ENCODE measurements at regions of chr12 and their contacts with region 1.

Region 1: DNA sequence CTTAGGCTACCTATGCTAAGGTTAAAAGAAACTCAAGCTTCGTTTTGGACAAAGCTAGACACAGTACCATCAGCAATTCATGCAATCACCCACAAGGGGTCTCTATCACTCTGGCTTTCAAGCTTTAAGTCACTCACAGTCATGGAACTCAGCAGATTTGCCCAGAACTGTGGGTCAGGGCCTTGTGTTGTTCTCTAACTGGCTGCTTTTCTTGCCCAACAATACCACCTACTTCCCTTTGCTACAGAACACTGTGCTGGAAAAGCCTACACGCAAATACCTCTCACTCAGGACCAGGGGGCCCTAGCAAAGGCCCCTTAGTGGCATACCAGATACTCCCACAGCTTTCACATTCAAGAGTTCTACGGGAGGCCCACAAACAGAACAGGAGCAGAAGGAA is 9.1 kb downstream of the NEMP1 start:
- DNase-seq: peak; percentile 73 to 77 (median 75)
- H3K4me3 ChIP-seq: no peak overlapping the region
- H3K4me3 Mint-ChIP-seq: peak overlapping the region in 3 of 8 donors; percentile 0 to 37 (median 28)
- H3K27ac ChIP-seq: peak overlapping the region; percentile 57
- H3K27ac Mint-ChIP-seq: peak overlapping the region; percentile 75 to 89 (median 85)
- H3K4me1 ChIP-seq: peaks cover 25% of the 10 kb centered on the region
- H3K4me1 Mint-ChIP-seq: peaks cover 11 to 34% (median 15%) of the 10 kb centered on the region in 4 donors
- H3K27me3 ChIP-seq: no peaks in the 10 kb centered on the region
- H3K27me3 Mint-ChIP-seq: no peaks in the 10 kb centered on the region

Region 2: GRCh38 chr12:57005980-57006808 is 63.3 kb before region 1 on chr12 and contains the start of gene ZBTB39:
- CTCF ChIA-PET with region 1: interaction called, 226 read pairs
- POLR2A ChIA-PET with region 1: interaction called, 3 read pairs
- intact Hi-C with region 1: no loop called
- DNase-seq: peak; percentile 50 to 76 (median 68)
- H3K4me3 ChIP-seq: peak within 1 kb of the TSS; percentile 44 to 60
- H3K4me3 Mint-ChIP-seq: peak within 1 kb of the TSS; percentile 90 to 98 (median 96)
- H3K27ac ChIP-seq: peak within 1 kb of the TSS; percentile 69
- H3K27ac Mint-ChIP-seq: peak within 1 kb of the TSS; percentile 83 to 96 (median 95)
- H3K4me1 ChIP-seq: peaks cover 52% of the 10 kb centered on the region
- H3K4me1 Mint-ChIP-seq: peaks cover 36 to 67% (median 52%) of the 10 kb centered on the region in 4 donors
- H3K27me3 ChIP-seq: no peaks in the 10 kb centered on the region
- H3K27me3 Mint-ChIP-seq: no peaks in the 10 kb centered on the region
- total RNA-seq, gene ZBTB39: 10.8 to 12.2 TPM

Region 3: DNA sequence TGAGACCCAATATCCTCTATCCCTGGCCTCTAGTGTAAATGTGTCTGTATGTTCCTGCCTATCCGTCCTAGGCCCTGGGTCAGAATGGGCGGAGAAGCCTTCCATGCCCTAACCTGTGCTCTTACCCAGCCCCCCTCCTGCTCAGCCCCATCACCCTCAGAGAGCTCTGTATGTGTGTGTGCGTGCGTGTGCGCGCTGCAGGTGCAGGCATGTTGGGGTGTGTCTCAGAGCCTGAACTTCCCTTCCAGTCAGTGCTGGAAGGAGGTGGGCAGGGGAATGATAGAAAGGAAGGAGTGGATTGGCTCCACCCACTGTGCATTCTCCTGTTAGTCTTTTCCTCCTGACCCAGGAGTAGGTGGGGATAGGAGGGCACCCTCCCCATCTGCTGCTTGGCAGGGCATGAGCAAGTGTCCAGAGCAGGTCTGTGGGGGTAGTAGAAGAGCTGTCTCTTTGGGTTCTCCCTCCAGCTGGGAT is 26.6 kb after region 1 on chr12:
- CTCF ChIA-PET with region 1: interaction called, 184 read pairs
- POLR2A ChIA-PET with region 1: interaction called, 108 read pairs
- intact Hi-C with region 1: loop called (anchors 1 kb)
- DNase-seq: no peak
- H3K4me3 ChIP-seq: no peak overlapping the region
- H3K4me3 Mint-ChIP-seq: no peak overlapping the region
- H3K27ac ChIP-seq: no peak overlapping the region
- H3K27ac Mint-ChIP-seq: peak overlapping the region in 5 of 7 donors; percentile 18 to 88 (median 55)
- H3K4me1 ChIP-seq: peaks cover 42% of the 10 kb centered on the region
- H3K4me1 Mint-ChIP-seq: peaks cover 14 to 43% (median 28%) of the 10 kb centered on the region in 4 donors
- H3K27me3 ChIP-seq: no peaks in the 10 kb centered on the region
- H3K27me3 Mint-ChIP-seq: no peaks in the 10 kb centered on the region

Region 4: GRCh38 chr12:57162160-57163125 is 92.9 kb after region 1 on chr12:
- CTCF ChIA-PET with region 1: no interaction called
- POLR2A ChIA-PET with region 1: no interaction called
- intact Hi-C with region 1: no loop called
- DNase-seq: no peak
- H3K4me3 ChIP-seq: no peak overlapping the region
- H3K4me3 Mint-ChIP-seq: no peak overlapping the region
- H3K27ac ChIP-seq: no peak overlapping the region
- H3K27ac Mint-ChIP-seq: no peak overlapping the region
- H3K4me1 ChIP-seq: no peaks in the 10 kb centered on the region
- H3K4me1 Mint-ChIP-seq: peaks cover 4 to 8% (median 5%) of the 10 kb centered on the region in 4 donors
- H3K27me3 ChIP-seq: no peaks in the 10 kb centered on the region
- H3K27me3 Mint-ChIP-seq: no peaks in the 10 kb centered on the region

Region 5: DNA sequence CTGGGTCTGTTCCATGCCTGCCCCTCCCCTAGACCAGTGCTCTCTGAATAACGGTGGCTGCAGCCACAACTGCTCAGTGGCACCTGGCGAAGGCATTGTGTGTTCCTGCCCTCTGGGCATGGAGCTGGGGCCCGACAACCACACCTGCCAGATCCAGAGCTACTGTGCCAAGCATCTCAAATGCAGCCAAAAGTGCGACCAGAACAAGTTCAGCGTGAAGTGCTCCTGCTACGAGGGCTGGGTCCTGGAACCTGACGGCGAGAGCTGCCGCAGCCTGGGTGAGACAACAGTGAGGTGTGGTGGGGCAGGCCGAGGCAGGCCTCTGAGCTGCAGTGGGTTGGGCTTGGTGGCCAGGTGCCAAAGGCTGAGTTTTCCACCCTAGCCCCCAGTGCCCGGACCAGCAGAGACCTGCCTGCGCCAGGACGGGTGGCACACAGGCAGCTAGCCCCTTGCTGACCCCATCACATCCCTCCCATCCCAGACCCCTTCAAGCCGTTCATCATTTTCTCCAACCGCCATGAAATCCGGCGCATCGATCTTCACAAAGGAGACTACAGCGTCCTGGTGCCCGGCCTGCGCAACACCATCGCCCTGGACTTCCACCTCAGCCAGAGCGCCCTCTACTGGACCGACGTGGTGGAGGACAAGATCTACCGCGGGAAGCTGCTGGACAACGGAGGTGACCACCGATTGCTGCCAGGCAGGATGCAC is 106.1 kb after region 1 on chr12:
- CTCF ChIA-PET with region 1: interaction called, 22 read pairs
- POLR2A ChIA-PET with region 1: no interaction called
- intact Hi-C with region 1: no loop called
- DNase-seq: peak in 3 of 5 donors; percentile 14 to 43 (median 24)
- H3K4me3 ChIP-seq: no peak overlapping the region
- H3K4me3 Mint-ChIP-seq: no peak overlapping the region
- H3K27ac ChIP-seq: no peak overlapping the region
- H3K27ac Mint-ChIP-seq: no peak overlapping the region
- H3K4me1 ChIP-seq: no peaks in the 10 kb centered on the region
- H3K4me1 Mint-ChIP-seq: peaks cover 0 to 5% (median 3%) of the 10 kb centered on the region in 4 donors
- H3K27me3 ChIP-seq: no peaks in the 10 kb centered on the region
- H3K27me3 Mint-ChIP-seq: no peaks in the 10 kb centered on the region

Region 6: GRCh38 chr12:57238854-57239554 is 169.5 kb after region 1 on chr12:
- CTCF ChIA-PET with region 1: interaction called, 3 read pairs
- POLR2A ChIA-PET with region 1: no interaction called
- intact Hi-C with region 1: loop called (anchors 5 kb)
- DNase-seq: peak; percentile 80 to 87 (median 82)
- H3K4me3 ChIP-seq: peak overlapping the region; percentile 42 to 79
- H3K4me3 Mint-ChIP-seq: peak overlapping the region; percentile 90 to 98 (median 94)
- H3K27ac ChIP-seq: no peak overlapping the region
- H3K27ac Mint-ChIP-seq: peak overlapping the region in 6 of 7 donors; percentile 7 to 85 (median 62)
- H3K4me1 ChIP-seq: peaks cover 87% of the 10 kb centered on the region
- H3K4me1 Mint-ChIP-seq: peaks cover 41 to 88% (median 60%) of the 10 kb centered on the region in 4 donors
- H3K27me3 ChIP-seq: peaks cover 43% of the 10 kb centered on the region
- H3K27me3 Mint-ChIP-seq: peaks cover 32 to 52% of the 10 kb centered on the region in 2 donors

Region 7: DNA sequence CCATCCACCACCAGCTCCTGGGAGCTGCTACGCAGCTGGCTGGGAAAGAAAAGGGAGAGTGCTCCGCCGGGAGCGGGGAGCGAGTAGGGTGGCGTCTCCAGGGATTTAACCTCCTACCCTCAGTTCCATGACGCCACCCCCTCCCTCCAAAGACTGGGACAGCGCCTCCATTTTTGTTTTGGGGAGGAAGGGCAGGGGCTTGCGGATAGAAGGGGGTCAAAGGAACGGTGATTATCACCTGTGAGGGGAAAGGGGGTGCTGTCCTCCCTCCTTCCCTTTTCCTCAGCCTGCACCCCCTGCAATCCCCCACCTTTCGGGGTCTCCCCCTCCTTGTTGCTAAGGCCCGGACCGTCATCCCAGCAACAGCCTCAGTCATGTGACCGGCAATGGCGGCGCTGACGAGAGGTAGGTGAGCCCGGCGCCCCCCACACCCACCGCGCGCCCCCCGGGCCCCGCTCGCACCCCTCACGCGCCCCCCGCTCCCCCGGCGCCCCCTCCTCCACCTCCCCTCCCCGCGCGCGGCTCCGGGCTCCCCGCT is 535.0 kb after region 1 on chr12 and contains the start of gene DTX3:
- CTCF ChIA-PET with region 1: no interaction called
- POLR2A ChIA-PET with region 1: no interaction called
- intact Hi-C with region 1: no loop called
- DNase-seq: peak in 3 of 5 donors; percentile 33 to 43 (median 39)
- H3K4me3 ChIP-seq: peak within 1 kb of the TSS; percentile 60 to 66
- H3K4me3 Mint-ChIP-seq: peak within 1 kb of the TSS; percentile 85 to 90 (median 87)
- H3K27ac ChIP-seq: peak within 1 kb of the TSS; percentile 24
- H3K27ac Mint-ChIP-seq: peak within 1 kb of the TSS; percentile 63 to 96 (median 93)
- H3K4me1 ChIP-seq: peaks cover 30% of the 10 kb centered on the region
- H3K4me1 Mint-ChIP-seq: peaks cover 17 to 39% (median 28%) of the 10 kb centered on the region in 4 donors
- H3K27me3 ChIP-seq: no peaks in the 10 kb centered on the region
- H3K27me3 Mint-ChIP-seq: peaks cover 0 to 1% of the 10 kb centered on the region in 2 donors
- total RNA-seq, gene DTX3: 33.8 to 37.1 TPM

Measured in CD4-positive, alpha-beta memory T cell (primary cell).